MCF 10A (cell line): ENCODE measurements at regions of chr1 and their contacts with region 1.

Region 1: GRCh38 chr1:242723044-242723716 is 198.7 kb upstream of the PLD5 start:
- DNase-seq: no peak
- H3K4me3 Mint-ChIP-seq: no peak overlapping the region
- H3K27ac Mint-ChIP-seq: no peak overlapping the region
- H3K4me1 Mint-ChIP-seq: no peaks in the 10 kb centered on the region
- H3K27me3 Mint-ChIP-seq: no peaks in the 10 kb centered on the region
- CTCF ChIP-seq: no peak

Region 2: DNA sequence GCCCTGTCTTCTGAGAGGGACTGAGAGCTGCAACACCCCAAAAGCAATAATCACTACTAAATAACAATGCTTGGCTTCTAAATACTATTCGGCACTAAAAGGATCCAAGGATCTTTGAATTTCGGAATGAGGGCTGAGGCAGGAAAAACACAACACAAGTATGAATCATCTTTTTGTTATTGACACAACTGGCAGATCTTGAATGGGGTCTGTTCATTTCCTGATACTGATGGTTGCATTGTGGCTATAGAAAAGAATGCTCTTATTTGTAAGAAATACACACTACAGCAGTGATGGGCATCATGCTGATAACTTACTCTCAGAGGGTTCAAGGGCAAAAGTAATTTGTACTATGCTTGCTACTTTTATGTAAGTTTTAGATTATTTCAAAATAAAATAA is 49.5 kb before region 1 on chr1:
- CTCF ChIA-PET with region 1: interaction called, 5 read pairs
- POLR2A ChIA-PET with region 1: no interaction called
- intact Hi-C with region 1: loop called (anchors 5 kb)
- DNase-seq: no peak
- H3K4me3 Mint-ChIP-seq: no peak overlapping the region
- H3K27ac Mint-ChIP-seq: no peak overlapping the region
- H3K4me1 Mint-ChIP-seq: no peaks in the 10 kb centered on the region
- H3K27me3 Mint-ChIP-seq: no peaks in the 10 kb centered on the region
- CTCF ChIP-seq: no peak